GM13976 (cell line): ENCODE measurements at regions of chr1 and their contacts with region 1.

Region 1: GRCh38 chr1:87292684-87293493 is 35.8 kb upstream of the LMO4 start:
- DNase-seq: peak; percentile 47
- CTCF ChIP-seq: peak; percentile 73

Region 2: GRCh38 chr1:87131809-87132283 is 161.0 kb before region 1 on chr1:
- in situ Hi-C with region 1: loop called (anchors 25 kb)
- DNase-seq: peak; percentile 88
- CTCF ChIP-seq: peak; percentile 99

Region 3: DNA sequence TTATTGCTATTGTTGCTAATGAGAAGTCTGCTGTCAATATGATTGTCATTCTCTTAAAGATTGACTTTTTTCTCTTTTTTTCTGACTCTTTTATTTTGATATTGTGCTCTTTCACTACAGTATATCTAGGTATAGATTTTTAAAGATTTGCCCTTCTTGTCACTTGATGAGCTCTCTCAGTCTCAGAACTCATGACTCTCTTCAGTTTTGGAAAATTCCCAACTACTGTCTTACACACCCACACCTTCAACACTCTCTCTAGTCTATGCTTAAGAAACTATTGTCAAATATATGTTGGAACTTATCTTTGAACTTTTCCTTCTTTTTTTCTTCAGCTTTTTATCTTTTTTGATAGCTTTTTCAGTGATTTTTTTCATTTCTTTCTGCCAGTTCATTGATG is 86.4 kb after region 1 on chr1:
- in situ Hi-C with region 1: no loop called
- DNase-seq: no peak
- CTCF ChIP-seq: no peak

Region 4: DNA sequence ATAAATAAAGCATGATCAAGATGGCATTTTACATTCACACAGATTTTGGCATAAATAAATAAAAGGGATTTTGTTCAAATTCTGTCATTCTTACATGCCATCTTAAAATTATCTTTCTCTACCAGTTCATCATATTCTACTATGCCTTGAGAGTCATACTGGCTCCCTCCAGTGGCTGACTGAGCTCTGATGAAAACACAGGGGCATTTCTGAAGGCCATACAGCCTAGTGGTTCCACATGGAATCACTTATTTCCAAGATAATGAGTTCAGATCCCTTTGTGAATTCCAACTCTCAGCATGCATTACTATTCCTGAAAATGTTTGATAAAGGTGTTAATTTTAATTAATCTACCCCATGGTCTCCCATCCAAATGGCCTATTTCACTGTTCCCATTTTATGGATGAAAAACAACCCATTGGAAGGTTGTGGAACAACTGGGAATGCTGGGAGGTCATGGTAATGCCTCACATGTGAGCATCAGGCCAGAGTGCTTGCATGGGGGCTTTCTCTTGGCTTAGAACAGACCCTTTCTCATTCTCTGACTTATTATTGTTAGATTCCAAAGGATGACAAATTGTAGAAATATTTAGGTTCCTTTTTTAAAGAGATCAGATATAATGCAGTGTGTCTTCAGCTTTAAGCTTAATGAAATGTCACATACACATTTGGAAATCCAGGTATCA is 768.7 kb after region 1 on chr1:
- in situ Hi-C with region 1: loop called (anchors 25 kb)
- DNase-seq: peak; percentile 15
- CTCF ChIP-seq: peak; percentile 49